IMR-90 (cell line): ENCODE measurements at regions of chr3 and their contacts with region 1.

Region 1: GRCh38 chr3:130878464-130878863 is 15.4 kb upstream of the ATP2C1 start:
- DNase-seq: no peak
- ATAC-seq: no peak
- H3K4me3 ChIP-seq: no peak overlapping the region
- H3K27ac ChIP-seq: no peak overlapping the region
- H3K4me1 ChIP-seq: no peaks in the 10 kb centered on the region
- H3K27me3 ChIP-seq: no peaks in the 10 kb centered on the region
- CTCF ChIP-seq: no peak
- POLR2A ChIP-seq: no peak
- RAD21 ChIP-seq: no peak

Region 2: GRCh38 chr3:130857326-130858026 is 21.0 kb before region 1 on chr3:
- CTCF ChIA-PET with region 1: no interaction called
- POLR2A ChIA-PET with region 1: interaction called, 11 read pairs
- dilution Hi-C with region 1: no loop called
- in situ Hi-C with region 1: no loop called
- intact Hi-C with region 1: no loop called
- DNase-seq: no peak
- ATAC-seq: no peak
- H3K4me3 ChIP-seq: no peak overlapping the region
- H3K27ac ChIP-seq: no peak overlapping the region
- H3K4me1 ChIP-seq: no peaks in the 10 kb centered on the region
- H3K27me3 ChIP-seq: no peaks in the 10 kb centered on the region; the same call in 1 of the 2 replicates
- CTCF ChIP-seq: no peak
- POLR2A ChIP-seq: no peak
- RAD21 ChIP-seq: no peak

Region 3: DNA sequence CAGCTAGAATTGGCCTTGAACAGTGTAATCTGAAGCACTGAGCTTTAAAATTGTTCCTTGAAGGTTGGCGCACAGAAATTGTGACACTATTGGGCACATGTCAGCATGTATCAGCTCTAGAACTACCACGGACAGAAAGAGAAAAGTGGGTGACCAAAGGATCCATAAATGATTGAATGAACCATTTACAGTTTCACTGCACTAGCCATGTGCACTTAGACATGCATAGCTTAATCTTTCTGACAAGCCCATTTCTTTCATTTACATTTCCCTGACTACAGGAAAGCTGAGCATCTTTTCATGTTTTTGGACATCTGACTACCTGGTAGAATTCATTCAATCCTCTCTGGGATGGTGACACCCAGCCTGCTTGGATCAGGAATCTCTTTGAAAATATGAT is 539.3 kb after region 1 on chr3:
- CTCF ChIA-PET with region 1: no interaction called
- POLR2A ChIA-PET with region 1: no interaction called
- dilution Hi-C with region 1: no loop called
- in situ Hi-C with region 1: no loop called
- intact Hi-C with region 1: no loop called
- DNase-seq: no peak
- ATAC-seq: no peak
- H3K4me3 ChIP-seq: no peak overlapping the region
- H3K27ac ChIP-seq: no peak overlapping the region
- H3K4me1 ChIP-seq: no peaks in the 10 kb centered on the region
- H3K27me3 ChIP-seq: no peaks in the 10 kb centered on the region
- CTCF ChIP-seq: no peak
- POLR2A ChIP-seq: no peak
- RAD21 ChIP-seq: no peak